ENCODE measurements at regions of chr17 and their contacts with region 1.

Region 1: DNA sequence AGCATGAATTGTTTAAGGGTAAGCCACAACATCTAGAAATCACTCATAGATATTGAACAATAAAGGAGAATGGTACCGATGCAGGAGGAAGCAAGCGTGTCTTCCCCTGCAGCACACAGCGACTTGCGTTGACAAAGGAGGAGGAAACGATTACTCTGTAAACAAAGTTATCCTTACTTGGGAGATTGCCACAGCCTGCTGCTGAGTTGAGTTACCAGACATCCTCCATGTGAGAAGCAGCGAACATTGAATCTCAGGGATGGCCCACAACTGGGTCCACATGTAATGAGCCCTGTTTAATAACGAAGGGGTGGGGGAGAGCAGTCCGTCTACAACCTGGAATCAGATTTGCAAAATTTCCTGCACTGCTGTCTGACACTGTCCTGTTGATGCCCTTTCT is 27.7 kb downstream of the CLUH start:
- DNase-seq: no peak
- ATAC-seq: no peak
- H3K4me3 ChIP-seq: no peak overlapping the region
- H3K27ac ChIP-seq: no peak overlapping the region
- H3K4me1 ChIP-seq: peaks cover 18% of the 10 kb centered on the region
- H3K27me3 ChIP-seq: no peaks in the 10 kb centered on the region
- CTCF ChIP-seq: no peak

Region 2: GRCh38 chr17:2594722-2595599 is 89.0 kb before region 1 on chr17:
- CTCF ChIA-PET with region 1: no interaction called
- POLR2A ChIA-PET with region 1: interaction called, 14 read pairs
- in situ Hi-C with region 1: no loop called
- intact Hi-C with region 1: no loop called
- DNase-seq: no peak
- ATAC-seq: no peak
- H3K4me3 ChIP-seq: peak overlapping the region; percentile 84 to 93
- H3K27ac ChIP-seq: peak overlapping the region; percentile 88
- H3K4me1 ChIP-seq: peaks cover 23% of the 10 kb centered on the region
- H3K27me3 ChIP-seq: no peaks in the 10 kb centered on the region
- CTCF ChIP-seq: no peak

Region 3: DNA sequence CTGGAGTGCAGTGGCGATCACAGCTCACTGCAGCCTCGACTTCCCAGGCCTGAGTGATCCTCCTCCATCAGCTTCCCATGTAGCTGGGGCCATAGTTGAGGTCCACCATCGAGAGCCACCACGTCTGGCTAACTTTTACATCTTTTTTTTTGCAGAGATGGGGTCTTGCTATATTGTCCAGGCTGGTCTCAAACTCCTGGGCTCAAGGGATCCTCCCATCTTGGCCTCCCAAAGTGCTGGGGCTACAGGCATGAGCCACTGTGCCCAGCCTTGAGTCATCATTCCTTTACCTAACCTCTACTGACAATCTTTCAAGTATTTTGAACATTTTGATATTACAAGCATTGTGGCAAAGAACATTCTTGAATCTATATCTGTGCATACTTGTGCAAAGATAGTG is 75.0 kb after region 1 on chr17:
- CTCF ChIA-PET with region 1: no interaction called
- POLR2A ChIA-PET with region 1: no interaction called
- in situ Hi-C with region 1: no loop called
- intact Hi-C with region 1: no loop called
- DNase-seq: no peak
- ATAC-seq: no peak
- H3K4me3 ChIP-seq: no peak overlapping the region
- H3K27ac ChIP-seq: no peak overlapping the region
- H3K4me1 ChIP-seq: no peaks in the 10 kb centered on the region
- H3K27me3 ChIP-seq: no peaks in the 10 kb centered on the region; the same call in 1 of the 2 replicates
- CTCF ChIP-seq: no peak

Measured in Panc1 (cell line).